HCT116 (cell line): ENCODE measurements at regions of chr7 and their contacts with region 1.

Region 1: DNA sequence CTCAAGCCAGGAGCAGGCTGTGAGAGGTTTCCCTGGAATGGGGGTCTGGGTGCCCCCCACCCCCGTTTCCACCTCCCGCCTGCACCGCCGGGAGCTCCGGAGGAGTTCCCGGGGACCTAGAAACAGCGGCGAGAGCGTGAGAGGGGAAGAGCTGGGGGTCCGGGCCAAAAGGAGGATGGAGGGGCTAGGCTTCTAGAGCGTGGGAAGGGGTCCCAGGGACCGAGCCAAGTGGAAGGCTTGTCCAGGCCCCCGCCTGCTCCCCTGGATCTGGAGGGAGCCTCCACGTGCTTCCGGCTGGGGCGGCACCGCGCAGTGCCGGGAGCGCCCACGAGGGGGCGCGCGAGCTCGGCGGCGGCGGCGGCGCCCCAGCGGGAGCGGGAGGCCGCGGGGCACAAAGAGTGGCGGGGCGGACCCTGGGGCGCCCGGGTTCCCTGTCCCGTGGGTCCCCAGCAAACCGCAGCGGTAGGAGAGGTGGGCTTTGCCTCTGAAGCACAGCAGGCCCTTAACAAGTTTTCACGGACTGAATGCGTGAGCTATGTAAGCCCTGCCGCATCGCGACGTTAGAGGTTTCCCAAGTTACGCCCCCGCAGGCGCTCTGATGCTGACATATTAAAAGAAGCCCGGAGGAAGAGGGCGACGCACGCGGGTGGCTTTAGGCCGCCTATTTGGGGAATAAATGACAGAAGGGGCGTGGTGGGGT is 104.4 kb upstream of the LRRC4 start:
- DNase-seq: peak; percentile 40
- ATAC-seq: peak; percentile 93
- H3K4me3 ChIP-seq: peak overlapping the region; percentile 39 to 56
- H3K27ac ChIP-seq: no peak overlapping the region; the same call in 1 of the 2 replicates
- H3K4me1 ChIP-seq: peaks cover 0 to 10% of the 10 kb centered on the region in 2 experiments; a peak in 2 of 4 replicates
- H3K27me3 ChIP-seq: peaks cover 9% of the 10 kb centered on the region; the same call in 1 of the 2 replicates
- CTCF ChIP-seq: peak; percentile 52 to 77 (median 65)
- POLR2A ChIP-seq: no peak
- RAD21 ChIP-seq: peak; percentile 62

Region 2: GRCh38 chr7:127905491-127906330 is 230.0 kb before region 1 on chr7:
- CTCF ChIA-PET with region 1: no interaction called
- POLR2A ChIA-PET with region 1: no interaction called
- RAD21 ChIA-PET with region 1: no interaction called
- intact Hi-C with region 1: no loop called
- DNase-seq: no peak
- ATAC-seq: 0 out of 2 replicates have a peak, but pooled peaks have one; percentile 22
- H3K4me3 ChIP-seq: no peak overlapping the region
- H3K27ac ChIP-seq: no peak overlapping the region
- H3K4me1 ChIP-seq: peaks cover 0 to 12% of the 10 kb centered on the region in 2 experiments; a peak in 2 of 4 replicates
- H3K27me3 ChIP-seq: no peaks in the 10 kb centered on the region
- CTCF ChIP-seq: no peak
- POLR2A ChIP-seq: no peak
- RAD21 ChIP-seq: no peak

Region 3: GRCh38 chr7:128031901-128032604 is 103.6 kb before region 1 on chr7:
- CTCF ChIA-PET with region 1: no interaction called
- POLR2A ChIA-PET with region 1: no interaction called
- RAD21 ChIA-PET with region 1: no interaction called
- intact Hi-C with region 1: no loop called
- DNase-seq: no peak
- ATAC-seq: no peak
- H3K4me3 ChIP-seq: no peak overlapping the region
- H3K27ac ChIP-seq: no peak overlapping the region
- H3K4me1 ChIP-seq: no peaks in the 10 kb centered on the region
- H3K27me3 ChIP-seq: no peaks in the 10 kb centered on the region
- CTCF ChIP-seq: no peak
- POLR2A ChIP-seq: no peak
- RAD21 ChIP-seq: no peak

Region 4: DNA sequence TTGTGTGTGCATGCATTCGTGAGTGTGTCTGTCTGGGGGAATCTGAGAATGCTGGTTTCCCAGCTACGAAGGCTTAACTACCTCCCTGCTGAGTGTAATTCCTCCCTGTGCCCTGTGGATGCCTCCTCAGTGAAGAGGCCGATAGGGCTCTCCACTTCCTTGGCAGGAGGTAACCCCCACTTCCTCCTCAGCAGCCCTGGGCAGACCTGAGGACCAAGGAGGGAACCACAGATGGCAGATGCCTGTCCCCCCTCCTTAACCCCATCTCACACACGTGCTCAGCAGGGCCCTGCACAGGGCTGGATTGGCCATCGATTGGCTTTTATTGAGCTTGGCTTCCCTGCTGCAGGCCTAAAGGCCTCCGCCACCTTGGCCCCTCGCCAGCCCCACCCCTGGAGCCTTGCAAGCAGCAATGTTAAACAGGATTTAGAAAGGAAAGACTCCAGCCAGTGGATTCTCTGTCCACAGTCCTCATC is 58.8 kb before region 1 on chr7:
- CTCF ChIA-PET with region 1: no interaction called
- POLR2A ChIA-PET with region 1: no interaction called
- RAD21 ChIA-PET with region 1: no interaction called
- intact Hi-C with region 1: no loop called
- DNase-seq: no peak
- ATAC-seq: no peak
- H3K4me3 ChIP-seq: no peak overlapping the region
- H3K27ac ChIP-seq: no peak overlapping the region
- H3K4me1 ChIP-seq: no peaks in the 10 kb centered on the region
- H3K27me3 ChIP-seq: no peaks in the 10 kb centered on the region
- CTCF ChIP-seq: no peak
- POLR2A ChIP-seq: no peak
- RAD21 ChIP-seq: no peak

Region 5: GRCh38 chr7:128322040-128322643 is 186.5 kb after region 1 on chr7:
- CTCF ChIA-PET with region 1: no interaction called
- POLR2A ChIA-PET with region 1: no interaction called
- RAD21 ChIA-PET with region 1: no interaction called
- intact Hi-C with region 1: loop called (anchors 5 kb)
- DNase-seq: no peak
- ATAC-seq: peak; percentile 77
- H3K4me3 ChIP-seq: no peak overlapping the region
- H3K27ac ChIP-seq: no peak overlapping the region
- H3K4me1 ChIP-seq: no peaks in the 10 kb centered on the region
- H3K27me3 ChIP-seq: no peaks in the 10 kb centered on the region
- CTCF ChIP-seq: peak; percentile 35 to 50 (median 39); a peak in 5 of 6 replicates
- POLR2A ChIP-seq: no peak
- RAD21 ChIP-seq: peak; percentile 51